ENCODE measurements at regions of chr5 and their contacts with region 1.

Region 1: GRCh38 chr5:138503487-138504270 is 38.4 kb downstream of the EGR1 start:
- DNase-seq: peak; percentile 66
- ATAC-seq: peak; percentile 81
- H3K4me3 ChIP-seq: no peak overlapping the region
- H3K27ac ChIP-seq: no peak overlapping the region
- H3K4me1 ChIP-seq: no peaks in the 10 kb centered on the region
- H3K27me3 ChIP-seq: no peaks in the 10 kb centered on the region
- CTCF ChIP-seq: peak; percentile 67

Region 2: GRCh38 chr5:138449501-138450239 is 54.0 kb before region 1 on chr5:
- CTCF ChIA-PET with region 1: interaction called, 12 read pairs
- POLR2A ChIA-PET with region 1: no interaction called
- intact Hi-C with region 1: loop called (anchors 1 kb)
- DNase-seq: peak; percentile 85
- ATAC-seq: peak; percentile 97
- H3K4me3 ChIP-seq: peak overlapping the region; percentile 17; the same call in 1 of the 2 replicates
- H3K27ac ChIP-seq: no peak overlapping the region
- H3K4me1 ChIP-seq: no peaks in the 10 kb centered on the region
- H3K27me3 ChIP-seq: no peaks in the 10 kb centered on the region
- CTCF ChIP-seq: peak; percentile 82

Measured in PC-3 (cell line).